OCI-LY7 (cell line): ENCODE measurements at regions of chr4 and their contacts with region 1.

Region 1: DNA sequence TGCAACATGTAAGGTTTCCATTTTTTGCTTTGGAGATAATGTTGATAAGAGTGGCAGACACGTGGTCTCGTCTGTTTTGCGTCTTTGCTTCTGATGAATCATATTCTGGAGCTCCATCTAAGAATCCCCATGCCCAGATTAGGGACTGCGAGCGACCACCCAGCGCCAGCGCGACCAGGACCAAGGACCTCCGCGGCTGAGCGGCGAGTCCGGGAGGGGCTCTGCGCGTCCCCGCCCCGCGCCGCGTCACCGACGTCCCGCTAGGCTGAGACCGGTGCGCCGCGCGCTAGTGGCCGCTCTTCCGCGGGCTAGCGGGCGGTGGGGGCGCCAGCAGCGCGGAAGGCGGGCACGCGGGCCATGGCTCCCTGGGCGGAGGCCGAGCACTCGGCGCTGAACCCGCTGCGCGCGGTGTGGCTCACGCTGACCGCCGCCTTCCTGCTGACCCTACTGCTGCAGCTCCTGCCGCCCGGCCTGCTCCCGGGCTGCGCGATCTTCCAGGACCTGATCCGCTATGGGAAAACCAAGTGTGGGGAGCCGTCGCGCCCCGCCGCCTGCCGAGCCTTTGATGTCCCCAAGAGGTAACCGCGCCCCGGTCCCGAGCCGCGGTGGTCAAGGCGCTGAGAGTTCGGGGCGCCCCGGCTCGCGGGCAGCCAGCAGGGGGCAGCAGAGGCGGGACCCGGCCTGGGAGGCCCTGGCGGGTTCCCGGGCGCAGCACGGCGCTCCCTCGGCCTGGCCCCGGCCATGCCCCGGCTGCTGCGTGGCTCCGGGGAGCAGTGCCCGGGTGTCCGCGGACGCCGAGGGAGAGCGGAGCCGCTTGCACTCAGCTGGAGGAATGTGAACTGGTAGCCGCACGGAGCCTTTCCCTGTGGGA is at the start of gene SRD5A3:
- DNase-seq: peak; percentile 87
- H3K4me3 ChIP-seq: peak within 1 kb of the TSS; percentile 78
- H3K27ac ChIP-seq: peak within 1 kb of the TSS; percentile 60
- H3K4me1 ChIP-seq: peaks cover 15% of the 10 kb centered on the region
- CTCF ChIP-seq: peak; percentile 88
- total RNA-seq, gene SRD5A3: 3.9 and 5.9 TPM in 2 replicates

Region 2: GRCh38 chr4:55546756-55547465 is 200.7 kb after region 1 on chr4 and contains the start of gene CLOCK:
- CTCF ChIA-PET with region 1: interaction called, 3 read pairs
- POLR2A ChIA-PET with region 1: interaction called, 7 read pairs
- intact Hi-C with region 1: loop called (anchors 2 kb)
- DNase-seq: peak; percentile 86
- H3K4me3 ChIP-seq: peak within 1 kb of the TSS; percentile 79
- H3K27ac ChIP-seq: peak within 1 kb of the TSS; percentile 45
- H3K4me1 ChIP-seq: peaks cover 7% of the 10 kb centered on the region
- CTCF ChIP-seq: peak; percentile 68
- total RNA-seq, gene CLOCK: 1.9 and 2.0 TPM in 2 replicates

Region 3: DNA sequence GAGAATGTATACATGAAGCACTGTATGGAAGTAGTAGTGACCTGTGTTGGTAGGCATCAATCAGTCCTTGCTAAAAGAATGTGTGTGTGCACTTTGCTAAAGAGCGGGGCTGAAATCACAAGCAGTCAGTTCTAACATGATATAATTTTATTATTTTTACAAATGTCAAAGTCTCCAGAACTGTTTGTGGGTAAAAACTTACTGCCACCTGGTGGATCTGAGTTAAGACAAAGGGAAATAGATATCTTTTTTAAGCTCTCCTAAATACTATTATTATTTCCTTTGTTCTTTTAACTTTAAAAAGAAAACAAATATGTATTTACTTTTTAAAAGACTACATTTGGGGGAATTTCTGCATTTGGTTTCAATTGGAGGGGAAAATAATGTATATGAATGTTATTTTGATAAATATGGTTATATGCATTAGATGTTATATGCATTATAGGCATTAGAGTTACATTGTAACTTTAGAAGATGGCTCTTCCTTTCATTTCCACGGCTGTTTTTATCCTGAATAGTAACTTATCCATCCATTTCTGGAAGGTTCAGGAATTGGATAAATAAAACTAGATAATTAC is 208.3 kb after region 1 on chr4:
- CTCF ChIA-PET with region 1: interaction called, 3 read pairs
- POLR2A ChIA-PET with region 1: interaction called, 3 read pairs
- intact Hi-C with region 1: loop called (anchors 1 kb)
- DNase-seq: peak; percentile 40
- H3K4me3 ChIP-seq: no peak overlapping the region
- H3K27ac ChIP-seq: no peak overlapping the region
- H3K4me1 ChIP-seq: no peaks in the 10 kb centered on the region
- CTCF ChIP-seq: peak; percentile 85

Region 4: GRCh38 chr4:55722132-55722531 is 375.9 kb after region 1 on chr4:
- CTCF ChIA-PET with region 1: no interaction called
- POLR2A ChIA-PET with region 1: no interaction called
- intact Hi-C with region 1: no loop called
- DNase-seq: no peak
- H3K4me3 ChIP-seq: no peak overlapping the region
- H3K27ac ChIP-seq: no peak overlapping the region
- H3K4me1 ChIP-seq: no peaks in the 10 kb centered on the region
- CTCF ChIP-seq: no peak

Region 5: GRCh38 chr4:55736605-55737183 is 390.5 kb after region 1 on chr4:
- CTCF ChIA-PET with region 1: no interaction called
- POLR2A ChIA-PET with region 1: no interaction called
- intact Hi-C with region 1: loop called (anchors 10 kb)
- DNase-seq: peak; percentile 7
- H3K4me3 ChIP-seq: no peak overlapping the region
- H3K27ac ChIP-seq: no peak overlapping the region
- H3K4me1 ChIP-seq: no peaks in the 10 kb centered on the region
- CTCF ChIP-seq: peak; percentile 82

Region 6: GRCh38 chr4:55853484-55854046 is 507.4 kb after region 1 on chr4 and contains the start of gene EXOC1:
- CTCF ChIA-PET with region 1: no interaction called
- POLR2A ChIA-PET with region 1: no interaction called
- intact Hi-C with region 1: loop called (anchors 5 kb)
- DNase-seq: peak; percentile 97
- H3K4me3 ChIP-seq: peak within 1 kb of the TSS; percentile 95
- H3K27ac ChIP-seq: peak within 1 kb of the TSS; percentile 26
- H3K4me1 ChIP-seq: peaks cover 17% of the 10 kb centered on the region
- CTCF ChIP-seq: no peak
- total RNA-seq, gene EXOC1: 23.7 and 29.1 TPM in 2 replicates

Region 7: DNA sequence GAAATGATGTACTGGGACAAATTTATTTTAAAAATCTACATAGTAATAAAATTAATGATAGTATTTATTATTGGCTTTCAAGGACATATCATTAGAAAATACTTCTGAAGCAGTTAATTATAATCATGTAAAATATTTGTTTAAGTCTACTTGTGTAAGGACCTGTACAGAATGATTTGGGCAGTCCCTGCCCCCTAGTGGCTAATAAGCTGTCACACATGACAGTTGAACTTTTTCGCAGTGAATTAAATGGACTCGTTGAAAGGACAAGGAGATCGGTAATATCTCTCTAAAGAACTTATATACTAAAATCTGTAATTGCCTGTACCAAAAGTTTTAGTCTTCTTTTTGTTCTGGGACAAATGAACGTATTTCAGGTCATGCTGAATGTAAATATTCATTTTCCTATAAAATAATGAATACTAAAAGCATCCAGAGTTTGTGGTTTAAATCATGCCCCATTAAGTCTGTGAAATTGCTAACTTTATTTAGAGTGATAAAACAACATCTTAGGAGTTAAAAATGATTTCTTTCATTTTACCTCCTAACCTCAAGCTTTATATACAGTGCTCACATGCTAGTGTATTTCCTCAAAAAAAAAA is 520.9 kb after region 1 on chr4:
- CTCF ChIA-PET with region 1: no interaction called
- POLR2A ChIA-PET with region 1: interaction called, 3 read pairs
- intact Hi-C with region 1: loop called (anchors 5 kb)
- DNase-seq: peak; percentile 74
- H3K4me3 ChIP-seq: no peak overlapping the region
- H3K27ac ChIP-seq: no peak overlapping the region
- H3K4me1 ChIP-seq: no peaks in the 10 kb centered on the region
- CTCF ChIP-seq: peak; percentile 99